ENCODE measurements at regions of chr12 and their contacts with region 1.

Region 1: GRCh38 chr12:108514973-108515814 is at the start of gene FICD:
- DNase-seq: peak; percentile 100
- H3K4me3 Mint-ChIP-seq: peak within 1 kb of the TSS; percentile 90
- H3K27ac Mint-ChIP-seq: peak within 1 kb of the TSS; percentile 84
- H3K4me1 Mint-ChIP-seq: peaks cover 28% of the 10 kb centered on the region
- H3K27me3 Mint-ChIP-seq: no peaks in the 10 kb centered on the region
- total RNA-seq, gene FICD: 3.4 to 3.7 TPM

Region 2: GRCh38 chr12:107760809-107761501 is 754.2 kb before region 1 on chr12 and contains the start of gene PRDM4:
- CTCF ChIA-PET with region 1: no interaction called
- intact Hi-C with region 1: loop called (anchors 1 kb)
- DNase-seq: peak; percentile 92
- H3K4me3 Mint-ChIP-seq: peak within 1 kb of the TSS; percentile 93
- H3K27ac Mint-ChIP-seq: peak within 1 kb of the TSS; percentile 83
- H3K4me1 Mint-ChIP-seq: peaks cover 24% of the 10 kb centered on the region
- H3K27me3 Mint-ChIP-seq: no peaks in the 10 kb centered on the region
- total RNA-seq, gene PRDM4: 18.8 to 20.6 TPM

Region 3: GRCh38 chr12:107992870-107993451 is 522.2 kb before region 1 on chr12:
- CTCF ChIA-PET with region 1: interaction called, 5 read pairs
- intact Hi-C with region 1: loop called (anchors 1 kb)
- DNase-seq: no peak
- H3K4me3 Mint-ChIP-seq: no peak overlapping the region
- H3K27ac Mint-ChIP-seq: no peak overlapping the region
- H3K4me1 Mint-ChIP-seq: no peaks in the 10 kb centered on the region
- H3K27me3 Mint-ChIP-seq: peaks cover 20% of the 10 kb centered on the region

Region 4: DNA sequence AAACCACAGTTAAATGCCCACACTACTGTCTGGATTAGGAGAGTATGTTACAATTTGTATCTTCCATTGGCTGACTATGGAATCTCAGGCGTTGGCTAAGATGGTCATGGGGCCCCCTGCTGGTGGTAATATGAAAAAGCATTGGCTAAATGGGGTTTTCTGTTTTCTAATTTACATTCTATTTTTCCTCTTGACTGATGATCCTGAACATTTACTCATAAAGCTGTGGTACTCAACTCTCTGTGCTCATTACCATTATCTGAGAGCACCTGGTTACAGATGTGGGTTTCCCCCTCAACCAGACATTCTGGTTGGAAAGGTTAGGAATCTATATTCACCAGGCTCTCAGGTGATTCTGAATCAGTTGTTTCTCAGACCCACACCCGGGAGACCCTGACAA is 321.3 kb before region 1 on chr12:
- CTCF ChIA-PET with region 1: no interaction called
- intact Hi-C with region 1: loop called (anchors 5 kb)
- DNase-seq: peak; percentile 42
- H3K4me3 Mint-ChIP-seq: no peak overlapping the region
- H3K27ac Mint-ChIP-seq: no peak overlapping the region
- H3K4me1 Mint-ChIP-seq: no peaks in the 10 kb centered on the region
- H3K27me3 Mint-ChIP-seq: peaks cover 12% of the 10 kb centered on the region

Region 5: DNA sequence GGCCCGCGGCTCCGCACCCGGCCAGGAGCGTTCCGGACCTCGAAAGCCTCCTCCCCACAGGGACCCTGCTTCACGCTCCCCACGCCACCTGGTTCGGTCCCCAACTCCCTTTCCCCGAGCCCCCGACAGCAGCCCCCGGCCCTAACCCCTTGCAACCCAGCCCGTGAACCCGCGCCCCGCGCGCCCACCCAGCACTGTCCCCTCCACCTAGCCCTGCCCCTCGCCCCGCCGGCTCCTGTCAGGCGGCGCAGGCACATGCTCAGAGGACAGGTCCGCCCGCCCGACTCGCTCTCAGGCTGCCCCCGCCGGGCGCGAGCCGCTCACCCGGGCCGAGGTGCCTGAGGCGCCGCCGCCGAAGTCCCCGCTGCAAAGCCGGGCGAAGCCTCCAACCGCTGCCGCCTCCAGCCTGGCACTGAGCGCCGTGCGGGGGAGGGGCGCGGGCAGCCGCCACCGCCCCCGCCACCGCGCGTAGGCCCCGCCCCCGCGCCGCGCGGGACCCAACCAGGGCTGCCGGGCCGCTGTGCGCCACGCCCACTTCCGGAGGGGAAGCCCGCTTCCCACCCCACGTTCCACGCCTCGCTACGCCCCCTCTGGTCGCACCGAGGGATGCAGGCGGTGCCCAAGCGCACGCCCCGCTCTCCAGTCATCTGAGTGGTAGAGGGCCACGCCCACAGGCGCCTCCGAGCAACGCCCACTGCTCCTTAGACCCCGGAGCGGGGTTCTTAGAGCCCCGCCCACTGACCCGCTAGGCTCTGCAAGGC is 216.1 kb after region 1 on chr12 and contains the start of gene CORO1C:
- CTCF ChIA-PET with region 1: no interaction called
- intact Hi-C with region 1: loop called (anchors 1 kb)
- DNase-seq: peak; percentile 96
- H3K4me3 Mint-ChIP-seq: peak within 1 kb of the TSS; percentile 89
- H3K27ac Mint-ChIP-seq: peak within 1 kb of the TSS; percentile 87
- H3K4me1 Mint-ChIP-seq: peaks cover 29% of the 10 kb centered on the region
- H3K27me3 Mint-ChIP-seq: no peaks in the 10 kb centered on the region
- total RNA-seq, gene CORO1C: 36.4 to 43.7 TPM

Region 6: GRCh38 chr12:108856428-108857157 is 341.4 kb after region 1 on chr12:
- CTCF ChIA-PET with region 1: no interaction called
- intact Hi-C with region 1: loop called (anchors 1 kb)
- DNase-seq: peak; percentile 74
- H3K4me3 Mint-ChIP-seq: peak overlapping the region; percentile 92
- H3K27ac Mint-ChIP-seq: peak overlapping the region; percentile 75
- H3K4me1 Mint-ChIP-seq: peaks cover 40% of the 10 kb centered on the region
- H3K27me3 Mint-ChIP-seq: no peaks in the 10 kb centered on the region

Measured in activated naive CD4-positive, alpha-beta T cell treated with anti-CD3 and anti-CD28 coated beads for 36 hours (primary cell).